HepG2 (cell line): ENCODE measurements at regions of chr2 and their contacts with region 1.

Region 1: DNA sequence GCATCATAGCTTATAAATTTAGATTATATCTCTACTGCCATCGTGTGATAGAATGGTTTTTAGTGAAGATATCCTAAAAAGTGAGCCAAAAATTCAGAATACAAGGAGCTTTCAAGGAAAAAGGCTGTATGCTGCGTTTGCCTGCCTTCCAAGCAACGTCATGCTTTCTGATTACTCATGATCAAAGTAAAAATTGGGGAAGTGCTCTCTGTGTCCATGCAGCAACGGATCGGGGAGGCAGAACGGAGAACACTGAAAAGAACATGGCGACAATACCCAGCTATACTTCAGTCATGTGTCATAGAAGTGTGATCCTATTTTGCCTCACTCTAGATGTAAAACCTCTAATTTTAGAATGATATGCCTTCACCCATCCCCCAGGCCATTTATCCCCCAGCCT is 185.7 kb downstream of the SUCLG1 start:
- DNase-seq: no peak
- ATAC-seq: no peak
- H3K4me3 ChIP-seq: no peak overlapping the region
- H3K27ac ChIP-seq: no peak overlapping the region
- H3K4me1 ChIP-seq: peaks cover 18% of the 10 kb centered on the region
- H3K27me3 ChIP-seq: no peaks in the 10 kb centered on the region
- CTCF ChIP-seq: no peak
- EP300 ChIP-seq: no peak
- POLR2A ChIP-seq: no peak
- RAD21 ChIP-seq: no peak

Region 2: GRCh38 chr2:84152462-84152861 is 120.9 kb before region 1 on chr2:
- CTCF ChIA-PET with region 1: no interaction called
- POLR2A ChIA-PET with region 1: no interaction called
- in situ Hi-C with region 1: no loop called
- intact Hi-C with region 1: loop called (anchors 5 kb)
- DNase-seq: no peak
- ATAC-seq: no peak
- H3K4me3 ChIP-seq: no peak overlapping the region
- H3K27ac ChIP-seq: no peak overlapping the region
- H3K4me1 ChIP-seq: no peaks in the 10 kb centered on the region
- H3K27me3 ChIP-seq: no peaks in the 10 kb centered on the region
- CTCF ChIP-seq: no peak
- EP300 ChIP-seq: no peak
- POLR2A ChIP-seq: no peak
- RAD21 ChIP-seq: no peak

Region 3: DNA sequence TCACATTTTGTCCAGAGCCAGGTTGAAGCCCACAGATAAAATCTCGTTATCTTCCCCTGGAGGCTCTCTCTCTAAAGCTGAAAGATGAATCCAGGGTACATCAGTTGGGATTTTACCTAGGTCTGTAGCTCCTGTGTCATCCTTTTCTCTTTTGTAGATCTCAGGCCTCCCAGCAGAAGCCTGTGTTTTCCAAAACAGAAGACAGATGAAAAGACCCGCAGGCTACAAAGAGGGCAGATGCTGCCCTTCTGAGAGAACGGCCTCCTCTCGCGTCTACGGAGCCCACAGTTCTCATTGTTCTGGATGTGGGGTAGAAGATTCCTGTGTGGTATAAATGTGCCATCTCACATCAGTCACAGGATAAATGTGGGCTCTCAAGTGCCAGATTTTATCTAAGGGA is 46.2 kb after region 1 on chr2:
- CTCF ChIA-PET with region 1: no interaction called
- POLR2A ChIA-PET with region 1: no interaction called
- in situ Hi-C with region 1: no loop called
- intact Hi-C with region 1: no loop called
- DNase-seq: no peak
- ATAC-seq: no peak
- H3K4me3 ChIP-seq: no peak overlapping the region
- H3K27ac ChIP-seq: no peak overlapping the region
- H3K4me1 ChIP-seq: no peaks in the 10 kb centered on the region
- H3K27me3 ChIP-seq: no peaks in the 10 kb centered on the region
- CTCF ChIP-seq: no peak
- EP300 ChIP-seq: no peak
- POLR2A ChIP-seq: no peak
- RAD21 ChIP-seq: no peak